ENCODE measurements at regions of chr10 and their contacts with region 1.

Region 1: DNA sequence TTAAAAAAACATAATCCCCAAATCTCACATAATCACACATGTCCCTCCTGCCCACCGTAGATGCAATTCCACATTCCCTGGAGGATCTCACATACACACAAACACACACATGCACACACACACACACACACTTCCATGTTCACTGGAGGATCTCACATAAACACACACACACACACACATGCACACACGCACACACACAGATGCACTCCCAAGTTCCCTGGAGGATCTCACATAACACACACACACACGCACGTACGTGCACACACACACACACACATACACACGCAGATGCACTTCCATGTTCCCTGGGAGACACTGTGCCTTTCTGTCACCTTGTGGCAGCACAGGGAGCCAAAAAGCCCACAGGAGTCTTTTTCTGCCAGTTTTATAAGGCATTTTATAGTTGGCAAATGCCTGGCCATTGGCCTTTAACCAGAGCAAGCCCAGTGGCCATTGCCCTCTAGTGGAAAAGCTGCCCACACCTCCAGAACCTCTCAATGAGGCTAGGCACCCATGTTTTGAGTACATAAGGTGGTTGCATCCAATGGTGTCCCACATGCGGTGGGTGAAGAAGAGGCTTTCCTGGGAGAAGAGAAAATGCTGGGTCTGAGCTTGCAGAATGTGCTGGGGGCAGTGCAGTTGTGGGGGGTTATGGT is 115.4 kb upstream of the ACBD5 start:
- DNase-seq: no peak

Region 2: DNA sequence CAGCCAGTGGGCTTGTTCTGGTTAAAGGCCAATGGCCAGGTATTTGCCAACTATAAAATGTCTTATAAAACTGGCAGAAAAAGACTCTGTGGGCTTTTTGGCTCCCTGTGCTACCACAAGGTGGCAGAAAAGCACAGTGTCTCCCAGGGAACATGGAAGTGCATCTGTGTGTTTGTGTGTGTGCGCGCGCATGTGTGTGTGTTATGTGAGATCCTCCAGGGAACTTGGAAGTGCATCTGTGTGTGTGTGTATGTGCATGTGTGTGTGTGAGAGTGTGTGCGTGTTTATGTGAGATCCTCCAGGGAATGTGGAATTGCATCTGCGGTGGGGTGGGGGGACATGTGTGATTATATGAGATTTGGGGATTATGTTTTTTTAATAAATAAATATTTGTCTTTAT is 465.1 kb before region 1 on chr10:
- in situ Hi-C with region 1: loop called (anchors 5 kb)
- DNase-seq: peak; percentile 88

Region 3: GRCh38 chr10:27558612-27559020 is 202.6 kb after region 1 on chr10:
- in situ Hi-C with region 1: no loop called
- DNase-seq: peak; percentile 48